A549 (cell line): ENCODE measurements at regions of chrX and their contacts with region 1.

Region 1: DNA sequence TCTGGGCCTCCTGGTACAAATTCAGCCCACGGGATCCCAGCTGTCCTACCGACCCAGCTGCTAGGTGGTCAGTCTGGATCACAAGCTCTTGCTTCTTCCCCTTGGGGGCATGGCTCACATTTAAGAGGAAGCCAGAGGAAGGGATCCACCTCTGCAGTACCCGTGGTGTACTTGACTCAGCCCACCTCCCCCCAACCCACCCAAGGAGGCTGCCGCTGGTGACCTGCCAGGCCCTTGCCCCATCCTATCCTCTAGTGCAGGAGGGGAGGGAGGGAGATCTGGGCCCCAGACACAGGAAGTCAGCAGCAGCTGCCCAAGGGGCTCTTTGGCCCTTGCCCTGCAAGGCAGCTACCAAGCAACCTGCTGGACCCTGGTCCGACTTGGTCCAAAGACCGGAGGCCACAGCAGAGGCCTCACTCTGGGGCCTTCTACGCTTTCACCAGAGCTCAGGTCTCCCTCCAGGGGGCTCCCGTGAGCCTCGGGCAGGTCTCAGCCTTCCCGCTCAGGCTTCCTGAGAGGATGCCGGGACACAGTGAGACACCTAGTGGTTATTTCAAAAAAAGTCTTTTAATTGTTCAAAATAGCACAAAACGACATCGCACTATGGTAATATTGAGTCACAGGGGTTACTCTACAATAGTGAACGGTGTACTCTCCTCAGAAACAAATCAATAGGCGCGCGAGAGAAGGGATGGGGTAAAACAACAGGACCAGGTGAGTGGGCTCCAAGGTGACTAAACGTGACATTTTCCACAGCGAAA is 2.7 kb upstream of the RENBP start:
- DNase-seq: peak; percentile 72 to 87
- ATAC-seq: peak; percentile 83 to 91
- H3K4me3 ChIP-seq: no peak overlapping the region
- H3K27ac ChIP-seq: peak overlapping the region in 1 of 2 experiments; percentile 68; a peak in 2 of 6 replicates
- H3K4me1 ChIP-seq: peaks cover 3% of the 10 kb centered on the region; the same call in 1 of the 3 replicates
- CTCF ChIP-seq: peak; percentile 92
- EP300 ChIP-seq: no peak
- POLR2A ChIP-seq: no peak
- RAD21 ChIP-seq: peak; percentile 59 to 61

Region 2: DNA sequence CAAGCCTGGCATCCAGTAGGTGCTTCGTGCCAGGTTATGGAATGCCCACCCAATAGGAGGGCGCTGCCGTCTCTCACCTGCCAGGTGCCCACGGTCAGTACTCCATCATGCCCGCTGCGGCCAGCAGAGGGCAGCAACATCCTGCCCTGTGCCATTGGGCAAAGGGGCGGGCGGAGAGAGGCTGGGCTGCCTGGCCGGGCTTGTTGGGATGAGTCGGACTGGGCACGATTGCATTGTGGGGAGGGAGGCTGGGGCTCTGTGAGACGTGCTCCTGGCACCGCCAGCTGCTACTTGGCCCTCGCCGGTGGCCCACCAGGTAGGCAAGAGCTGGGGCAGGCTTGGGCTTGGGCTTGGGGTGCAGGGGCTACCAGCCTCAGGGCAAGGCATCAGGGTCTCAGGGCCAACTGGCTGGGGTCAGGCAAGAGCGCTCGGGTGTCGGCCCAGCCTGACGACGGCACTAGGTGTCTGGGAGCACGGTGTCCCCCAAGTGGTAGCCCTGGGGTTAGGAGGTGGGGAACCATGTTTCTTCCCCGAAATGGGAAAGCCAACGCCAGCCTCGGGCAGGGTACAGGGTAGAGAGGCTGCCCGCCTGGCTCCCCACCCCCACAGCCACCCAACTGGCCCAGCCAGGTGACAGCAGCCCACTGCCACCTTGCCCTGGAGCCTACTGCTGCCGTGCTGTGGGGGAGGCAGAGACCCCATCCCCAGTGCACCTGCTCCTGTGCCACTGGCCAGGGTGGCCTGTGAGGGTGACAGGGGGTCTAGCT is 183.0 kb before region 1 on chrX and contains the start of gene PLXNB3:
- CTCF ChIA-PET with region 1: interaction called, 46 read pairs
- POLR2A ChIA-PET with region 1: no interaction called
- DNase-seq: peak; percentile 76 to 77
- ATAC-seq: peak; percentile 72 to 91
- H3K4me3 ChIP-seq: 0 out of 3 replicates have a peak within 1 kb of the TSS, but pooled peaks have one; percentile 12
- H3K27ac ChIP-seq: peak within 1 kb of the TSS; percentile 65 to 82; a peak in 5 of 6 replicates
- H3K4me1 ChIP-seq: peaks cover 16% of the 10 kb centered on the region; the same call in 2 of the 3 replicates
- CTCF ChIP-seq: peak; percentile 77
- EP300 ChIP-seq: no peak
- POLR2A ChIP-seq: 0 out of 2 replicates have a peak, but pooled peaks have one; percentile 14
- RAD21 ChIP-seq: peak; percentile 85 to 92
- polyA plus RNA-seq, gene PLXNB3: 1.1 and 1.2 TPM in 2 replicates

Region 3: GRCh38 chrX:153818571-153819383 is 128.4 kb before region 1 on chrX:
- CTCF ChIA-PET with region 1: interaction called, 10 read pairs
- POLR2A ChIA-PET with region 1: no interaction called
- DNase-seq: peak in 1 of 2 experiments; percentile 57
- ATAC-seq: peak; percentile 85 to 92
- H3K4me3 ChIP-seq: peak overlapping the region; percentile 55
- H3K27ac ChIP-seq: peak overlapping the region; percentile 74 to 91
- H3K4me1 ChIP-seq: no peaks in the 10 kb centered on the region; the same call in 2 of the 3 replicates
- CTCF ChIP-seq: no peak
- EP300 ChIP-seq: no peak
- POLR2A ChIP-seq: peak; percentile 61
- RAD21 ChIP-seq: no peak

Region 4: GRCh38 chrX:153963546-153963945 is 16.4 kb after region 1 on chrX:
- CTCF ChIA-PET with region 1: interaction called, 47 read pairs
- POLR2A ChIA-PET with region 1: no interaction called
- DNase-seq: no peak
- ATAC-seq: no peak
- H3K4me3 ChIP-seq: no peak overlapping the region
- H3K27ac ChIP-seq: no peak overlapping the region
- H3K4me1 ChIP-seq: peaks cover 8% of the 10 kb centered on the region; the same call in 2 of the 3 replicates
- CTCF ChIP-seq: no peak
- EP300 ChIP-seq: no peak
- POLR2A ChIP-seq: no peak
- RAD21 ChIP-seq: no peak